ENCODE measurements at regions of chr2 and their contacts with region 1.

Region 1: GRCh38 chr2:172674034-172674967 is 61.3 kb upstream of the RAPGEF4 start:
- DNase-seq: no peak
- H3K4me3 ChIP-seq: no peak overlapping the region
- CTCF ChIP-seq: peak; percentile 77

Region 2: DNA sequence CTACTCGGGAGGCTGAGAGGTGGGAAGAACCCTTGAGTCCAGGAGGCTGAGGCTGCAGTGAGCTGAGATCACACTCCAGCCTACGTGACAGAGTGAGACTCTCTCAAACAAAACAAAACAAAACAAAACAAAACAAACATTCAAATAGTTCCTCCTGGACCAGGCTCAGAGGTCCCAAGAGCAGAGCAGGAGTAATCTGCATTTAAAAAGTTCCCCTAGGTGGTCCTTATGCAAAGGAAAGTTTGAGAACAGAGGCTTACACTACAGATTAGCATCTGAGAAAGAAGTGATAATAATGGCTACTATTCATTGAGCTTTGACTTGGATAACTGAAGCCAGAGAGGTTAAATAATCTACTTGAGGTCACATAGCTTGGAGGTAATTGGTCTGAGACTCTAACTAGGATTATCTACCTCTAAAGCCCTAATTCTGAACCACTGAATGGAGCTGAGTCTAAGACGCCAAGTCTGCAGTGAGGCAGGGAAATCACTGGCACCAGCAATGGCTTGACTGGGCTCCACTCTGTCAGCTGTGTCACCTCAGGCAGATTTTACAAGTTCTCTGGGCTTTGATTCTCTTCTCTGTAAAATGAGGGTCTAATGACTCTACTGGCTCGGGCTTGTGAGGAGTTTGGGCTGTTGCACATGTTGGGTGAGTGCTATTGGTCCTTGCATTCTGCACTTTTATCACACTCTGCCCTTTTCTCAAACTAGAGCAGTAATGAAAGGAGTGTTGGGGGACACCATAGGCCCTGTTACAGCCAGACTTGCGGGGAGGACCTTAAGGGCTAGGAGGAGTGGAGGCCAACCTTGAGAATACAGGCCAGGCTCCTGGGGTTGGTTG is 542.4 kb before region 1 on chr2:
- CTCF ChIA-PET with region 1: no interaction called
- POLR2A ChIA-PET with region 1: no interaction called
- DNase-seq: no peak
- H3K4me3 ChIP-seq: no peak overlapping the region
- CTCF ChIP-seq: no peak

Region 3: DNA sequence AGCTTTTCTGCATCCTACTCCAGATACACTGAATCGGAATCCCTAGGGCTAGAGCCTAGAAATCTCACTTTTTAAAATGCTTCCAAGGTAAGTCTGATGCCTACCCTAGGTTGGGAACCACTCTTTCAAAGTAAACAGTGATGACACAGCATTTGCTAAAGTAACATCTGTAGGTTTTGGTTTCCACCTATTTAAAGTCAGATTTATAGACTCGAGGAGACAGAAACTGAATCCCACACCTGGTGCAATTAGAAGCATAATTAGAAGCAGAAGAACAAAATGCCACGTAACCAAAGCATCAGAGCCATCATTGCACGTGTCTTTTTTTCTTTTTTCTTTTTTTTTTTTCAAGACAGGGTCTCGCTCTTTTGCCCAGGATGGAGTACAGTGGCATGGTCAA is 77.5 kb before region 1 on chr2:
- CTCF ChIA-PET with region 1: interaction called, 47 read pairs
- POLR2A ChIA-PET with region 1: no interaction called
- DNase-seq: no peak
- H3K4me3 ChIP-seq: no peak overlapping the region
- CTCF ChIP-seq: no peak

Region 4: GRCh38 chr2:172655091-172655837 is 19.0 kb before region 1 on chr2:
- CTCF ChIA-PET with region 1: interaction called, 12 read pairs
- POLR2A ChIA-PET with region 1: no interaction called
- DNase-seq: peak; percentile 59
- H3K4me3 ChIP-seq: no peak overlapping the region
- CTCF ChIP-seq: no peak

Region 5: GRCh38 chr2:172662099-172662498 is 12.2 kb before region 1 on chr2:
- CTCF ChIA-PET with region 1: interaction called, 15 read pairs
- POLR2A ChIA-PET with region 1: no interaction called
- DNase-seq: no peak
- H3K4me3 ChIP-seq: no peak overlapping the region
- CTCF ChIP-seq: no peak